OCI-LY7 (cell line): ENCODE measurements at regions of chr2 and their contacts with region 1.

Region 1: GRCh38 chr2:219160186-219161017 is at the start of gene NHEJ1:
- DNase-seq: peak; percentile 91
- H3K4me3 ChIP-seq: peak within 1 kb of the TSS; percentile 73
- H3K27ac ChIP-seq: peak within 1 kb of the TSS; percentile 68
- H3K4me1 ChIP-seq: peaks cover 11% of the 10 kb centered on the region
- CTCF ChIP-seq: peak; percentile 94
- total RNA-seq, gene NHEJ1: 12.7 and 14.9 TPM in 2 replicates

Region 2: GRCh38 chr2:219206442-219207253 is 46.2 kb after region 1 on chr2 and contains the start of gene ZFAND2B:
- CTCF ChIA-PET with region 1: interaction called, 4 read pairs
- POLR2A ChIA-PET with region 1: interaction called, 5 read pairs
- intact Hi-C with region 1: loop called (anchors 1 kb)
- DNase-seq: peak; percentile 97
- H3K4me3 ChIP-seq: peak within 1 kb of the TSS; percentile 69
- H3K27ac ChIP-seq: peak within 1 kb of the TSS; percentile 76
- H3K4me1 ChIP-seq: peaks cover 17% of the 10 kb centered on the region
- CTCF ChIP-seq: no peak
- total RNA-seq, gene ZFAND2B: 42.4 and 51.6 TPM in 2 replicates

Region 3: GRCh38 chr2:219229305-219230058 is 69.1 kb after region 1 on chr2 and contains the starts of genes ANKZF1 and ATG9A:
- CTCF ChIA-PET with region 1: no interaction called
- POLR2A ChIA-PET with region 1: no interaction called
- intact Hi-C with region 1: loop called (anchors 1 kb)
- DNase-seq: peak; percentile 99
- H3K4me3 ChIP-seq: peak within 1 kb of the TSS; percentile 87
- H3K27ac ChIP-seq: peak within 1 kb of the TSS; percentile 76
- H3K4me1 ChIP-seq: peaks cover 16% of the 10 kb centered on the region
- CTCF ChIP-seq: no peak
- total RNA-seq, gene ANKZF1: 57.8 and 91.0 TPM in 2 replicates
- total RNA-seq, gene ATG9A: 22.2 and 27.7 TPM in 2 replicates

Region 4: GRCh38 chr2:219245148-219245898 is 84.9 kb after region 1 on chr2 and contains the starts of genes GLB1L and STK16:
- CTCF ChIA-PET with region 1: interaction called, 4 read pairs
- POLR2A ChIA-PET with region 1: no interaction called
- intact Hi-C with region 1: loop called (anchors 1 kb)
- DNase-seq: peak; percentile 94
- H3K4me3 ChIP-seq: peak within 1 kb of the TSS; percentile 84
- H3K27ac ChIP-seq: peak within 1 kb of the TSS; percentile 96
- H3K4me1 ChIP-seq: peaks cover 54% of the 10 kb centered on the region
- CTCF ChIP-seq: no peak
- total RNA-seq, gene GLB1L: 2.7 and 8.6 TPM in 2 replicates
- total RNA-seq, gene STK16: 19.6 and 23.4 TPM in 2 replicates

Region 5: DNA sequence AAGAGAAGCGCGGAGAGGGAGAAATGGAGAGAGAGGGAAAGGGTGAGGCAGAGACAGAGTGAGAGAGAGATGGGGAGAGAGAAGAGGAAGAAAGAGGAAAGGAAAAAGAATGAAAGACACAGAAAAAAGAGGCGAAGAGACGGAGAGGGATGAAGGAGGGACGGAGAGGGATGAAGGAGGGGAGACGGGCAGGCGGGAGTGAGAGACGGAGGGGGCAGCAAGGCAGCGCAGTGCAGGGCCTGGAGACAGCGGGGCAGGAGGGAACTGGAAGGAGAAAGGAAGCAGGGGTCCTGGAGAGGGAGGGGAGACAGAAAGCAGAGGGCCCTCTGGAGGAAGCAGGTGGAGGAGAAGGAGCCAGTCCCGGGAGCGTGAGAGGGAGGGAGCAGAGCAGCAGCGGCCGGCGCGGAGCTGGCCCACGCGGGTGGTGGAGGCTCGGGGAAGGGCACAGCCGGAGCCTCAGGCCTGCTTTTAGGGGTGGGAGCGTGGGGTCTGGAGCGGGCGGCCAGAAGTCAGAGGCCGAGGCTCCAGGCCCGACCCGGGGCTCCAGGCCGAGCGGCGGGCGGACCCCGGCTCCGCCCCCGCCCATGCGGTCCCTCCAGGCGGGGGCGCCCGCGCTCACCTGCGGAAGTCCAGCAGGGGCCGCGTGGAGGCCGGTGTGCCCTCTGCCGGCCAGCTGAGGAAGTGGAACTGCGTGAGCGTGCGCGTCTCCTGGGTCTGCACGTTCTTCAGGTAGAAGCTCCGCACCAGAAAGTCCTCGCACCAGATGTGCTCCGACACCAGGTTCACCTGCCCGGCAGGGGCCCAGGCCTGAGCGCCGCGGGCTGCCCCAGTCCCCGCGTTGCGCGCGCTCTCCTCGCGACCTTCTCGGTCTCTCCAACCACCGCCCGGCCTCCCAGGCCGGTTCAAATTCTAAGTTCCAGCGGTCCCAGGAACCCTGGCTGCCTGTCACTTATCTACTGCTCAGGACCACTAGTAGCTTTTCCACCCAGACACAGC is 134.3 kb after region 1 on chr2:
- CTCF ChIA-PET with region 1: interaction called, 6 read pairs
- POLR2A ChIA-PET with region 1: interaction called, 3 read pairs
- intact Hi-C with region 1: loop called (anchors 1 kb)
- DNase-seq: peak; percentile 92
- H3K4me3 ChIP-seq: peak overlapping the region; percentile 64
- H3K27ac ChIP-seq: no peak overlapping the region
- H3K4me1 ChIP-seq: peaks cover 21% of the 10 kb centered on the region
- CTCF ChIP-seq: peak; percentile 97

Region 6: DNA sequence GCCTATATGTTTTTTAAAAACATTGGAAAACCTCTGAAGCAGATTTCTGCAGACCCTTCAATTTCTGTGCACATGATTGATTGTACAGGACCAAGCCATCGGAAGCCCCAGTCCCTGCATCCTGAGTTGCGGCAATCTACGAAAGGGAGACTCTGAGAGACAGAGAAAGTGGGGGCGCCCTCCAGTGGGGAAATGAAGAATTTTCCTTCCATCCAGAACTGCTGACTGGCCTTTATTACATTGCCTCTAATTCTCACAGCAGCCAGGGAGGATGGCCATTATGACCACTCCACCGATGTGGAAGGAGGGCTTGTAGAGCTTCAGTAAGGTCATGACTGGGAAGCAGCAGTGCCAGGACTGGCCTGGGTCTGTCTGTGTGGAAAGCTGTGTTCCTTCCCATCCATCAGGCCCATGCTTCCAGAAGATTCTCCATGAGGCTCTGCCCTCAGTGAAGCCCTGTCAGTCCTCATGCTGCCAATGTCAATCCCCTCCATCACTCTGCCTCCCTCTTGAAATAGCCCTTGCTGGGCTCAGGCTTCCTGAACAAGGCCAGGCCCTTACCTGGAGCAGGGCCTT is 192.1 kb after region 1 on chr2:
- CTCF ChIA-PET with region 1: no interaction called
- POLR2A ChIA-PET with region 1: no interaction called
- intact Hi-C with region 1: loop called (anchors 1 kb)
- DNase-seq: peak; percentile 63
- H3K4me3 ChIP-seq: no peak overlapping the region
- H3K27ac ChIP-seq: no peak overlapping the region
- H3K4me1 ChIP-seq: no peaks in the 10 kb centered on the region
- CTCF ChIP-seq: peak; percentile 91

Region 7: DNA sequence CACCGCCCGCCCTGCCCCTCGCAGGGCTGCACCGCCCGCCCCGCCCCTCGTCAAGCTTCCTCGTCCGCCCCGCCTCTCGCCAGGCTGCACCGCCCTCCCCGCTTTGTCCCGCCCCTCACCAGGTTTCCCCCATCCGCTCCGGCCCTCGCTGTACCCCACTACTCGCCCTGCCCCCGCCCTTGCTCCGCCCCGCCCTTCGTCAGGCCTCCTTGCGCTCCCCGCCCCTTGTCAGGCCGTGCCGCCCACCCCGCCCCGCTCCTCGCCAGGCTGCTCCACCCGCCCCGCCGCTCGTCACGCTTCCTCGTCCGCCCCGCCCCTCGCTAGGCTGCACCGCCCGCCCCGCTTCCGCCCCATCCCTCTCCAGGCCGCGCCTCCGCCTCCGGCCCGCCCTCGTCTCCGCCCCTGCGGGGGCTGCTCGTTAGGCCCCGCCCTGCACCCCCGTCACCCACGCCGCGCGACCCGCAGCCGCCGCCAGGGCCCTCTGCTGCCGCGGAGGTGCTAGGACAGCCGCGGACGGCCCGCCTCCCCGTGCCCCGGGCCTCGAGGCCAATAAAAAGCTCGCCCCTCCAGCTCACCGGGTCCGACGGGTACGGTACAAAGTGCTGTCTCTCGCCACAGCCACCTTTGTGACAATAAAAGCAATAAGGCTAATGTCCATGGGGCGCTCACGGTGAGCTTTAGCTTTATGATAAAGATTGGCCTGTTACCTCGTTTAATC is 227.9 kb after region 1 on chr2:
- CTCF ChIA-PET with region 1: no interaction called
- POLR2A ChIA-PET with region 1: no interaction called
- intact Hi-C with region 1: loop called (anchors 1 kb)
- DNase-seq: peak; percentile 95
- H3K4me3 ChIP-seq: peak overlapping the region; percentile 59
- H3K27ac ChIP-seq: no peak overlapping the region
- H3K4me1 ChIP-seq: peaks cover 15% of the 10 kb centered on the region
- CTCF ChIP-seq: peak; percentile 74

Region 8: DNA sequence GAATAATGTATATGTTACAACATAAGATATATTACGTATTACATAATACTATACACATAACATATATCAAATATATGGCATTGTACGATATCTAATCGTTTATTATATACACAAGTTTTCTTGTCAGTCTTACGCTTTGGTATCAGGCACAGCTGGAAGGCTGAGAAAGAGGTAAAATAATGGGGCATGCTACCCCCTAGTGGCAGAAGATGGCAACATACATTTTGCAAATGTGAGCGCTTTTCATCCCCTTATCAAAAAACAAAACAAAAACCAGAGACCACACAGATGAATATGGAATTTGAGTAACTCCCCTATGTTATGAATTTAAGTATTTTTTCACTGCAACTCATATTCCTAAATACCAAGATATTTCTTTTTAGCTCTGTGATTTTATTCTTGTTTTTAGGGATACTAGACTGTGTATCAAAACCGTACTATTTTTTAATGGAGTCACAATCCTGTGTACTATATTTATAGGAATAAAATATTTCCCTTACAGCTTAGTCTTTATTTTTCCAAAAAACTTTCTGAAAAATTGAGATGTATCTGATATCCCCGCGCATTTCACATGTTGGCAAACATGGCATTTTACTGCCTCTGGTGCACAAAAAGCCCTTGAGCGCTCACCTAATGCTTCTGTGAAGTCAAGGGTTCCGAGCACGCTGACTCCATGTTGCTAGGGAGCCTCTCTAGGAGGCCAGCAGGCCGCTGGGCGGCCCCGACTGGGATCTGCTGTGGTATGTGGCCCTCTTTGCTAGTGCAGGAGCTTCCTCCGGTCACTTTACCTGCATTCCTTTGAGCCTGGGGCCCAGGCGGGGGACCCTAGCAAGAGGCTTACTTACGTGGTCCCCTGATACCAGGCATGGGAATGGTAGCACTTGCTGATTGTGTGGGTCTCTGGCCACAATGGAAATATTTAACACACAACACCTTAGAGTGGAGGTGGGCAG is 529.5 kb after region 1 on chr2:
- CTCF ChIA-PET with region 1: no interaction called
- POLR2A ChIA-PET with region 1: no interaction called
- intact Hi-C with region 1: no loop called
- DNase-seq: peak; percentile 66
- H3K4me3 ChIP-seq: no peak overlapping the region
- H3K27ac ChIP-seq: no peak overlapping the region
- H3K4me1 ChIP-seq: peaks cover 5% of the 10 kb centered on the region
- CTCF ChIP-seq: peak; percentile 79